PC-9 (cell line): ENCODE measurements at regions of chr3 and their contacts with region 1.

Region 1: GRCh38 chr3:114775395-114775794 is 371.7 kb downstream of the ZBTB20 start:
- DNase-seq: no peak
- H3K4me3 ChIP-seq: no peak overlapping the region
- H3K27ac ChIP-seq: no peak overlapping the region
- H3K4me1 ChIP-seq: no peaks in the 10 kb centered on the region
- H3K27me3 ChIP-seq: no peaks in the 10 kb centered on the region
- CTCF ChIP-seq: no peak

Region 2: GRCh38 chr3:114584734-114585371 is 190.5 kb before region 1 on chr3:
- CTCF ChIA-PET with region 1: no interaction called
- POLR2A ChIA-PET with region 1: no interaction called
- intact Hi-C with region 1: no loop called
- DNase-seq: no peak
- H3K4me3 ChIP-seq: no peak overlapping the region
- H3K27ac ChIP-seq: no peak overlapping the region
- H3K4me1 ChIP-seq: no peaks in the 10 kb centered on the region
- H3K27me3 ChIP-seq: no peaks in the 10 kb centered on the region
- CTCF ChIP-seq: no peak

Region 3: GRCh38 chr3:114827495-114827894 is 52.1 kb after region 1 on chr3:
- CTCF ChIA-PET with region 1: no interaction called
- POLR2A ChIA-PET with region 1: no interaction called
- intact Hi-C with region 1: loop called (anchors 5 kb)
- DNase-seq: peak in 1 of 2 experiments; percentile 2
- H3K4me3 ChIP-seq: no peak overlapping the region
- H3K27ac ChIP-seq: no peak overlapping the region
- H3K4me1 ChIP-seq: no peaks in the 10 kb centered on the region
- H3K27me3 ChIP-seq: no peaks in the 10 kb centered on the region
- CTCF ChIP-seq: peak; percentile 64